ENCODE measurements at regions of chr1 and their contacts with region 1.

Region 1: GRCh38 chr1:40668769-40669525 is 3.5 kb upstream of the RIMS3 start:
- DNase-seq: peak; percentile 89
- ATAC-seq: peak; percentile 64

Region 2: GRCh38 chr1:40625066-40625465 is 43.9 kb before region 1 on chr1:
- intact Hi-C with region 1: loop called (anchors 2 kb)
- DNase-seq: no peak
- ATAC-seq: no peak

Measured in Right ventricle myocardium inferior (tissue), 1 donor.